Right ventricle myocardium inferior (tissue), 1 donor: ENCODE measurements at regions of chr19 and their contacts with region 1.

Region 1: GRCh38 chr19:37077934-37078725 is at the start of gene ZNF420:
- DNase-seq: peak; percentile 95
- ATAC-seq: peak; percentile 99
- total RNA-seq, gene ZNF420: 11.6 TPM

Region 2: DNA sequence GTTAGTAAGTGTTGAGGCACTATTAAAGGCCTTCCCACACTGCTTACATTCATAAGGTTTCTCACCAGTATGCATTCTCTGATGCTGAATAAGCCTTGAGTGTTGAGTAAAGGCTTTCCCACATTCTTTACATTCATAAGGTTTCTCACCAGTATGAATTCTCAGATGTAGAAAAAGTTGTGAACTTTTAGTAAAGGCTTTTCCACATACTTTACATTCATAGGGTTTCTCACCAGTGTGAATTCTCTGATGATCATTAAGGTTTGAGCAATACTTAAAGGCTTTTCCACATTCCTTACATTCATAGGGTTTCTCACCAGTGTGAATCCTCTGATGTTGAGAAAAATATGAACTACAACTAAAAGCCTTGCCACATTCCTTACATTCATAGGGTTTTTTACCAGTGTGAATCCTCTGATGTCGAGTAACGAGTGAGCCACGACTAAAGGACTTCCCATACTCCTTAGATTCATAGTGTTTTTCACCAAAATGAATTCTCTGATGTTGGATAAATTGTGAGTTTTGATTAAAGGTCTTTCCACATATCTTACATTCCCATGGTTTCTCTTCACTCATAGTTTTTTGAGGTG is 186.3 kb before region 1 on chr19:
- intact Hi-C with region 1: no loop called
- DNase-seq: no peak
- ATAC-seq: no peak

Region 3: GRCh38 chr19:36973021-36973843 is 104.9 kb before region 1 on chr19:
- intact Hi-C with region 1: loop called (anchors 10 kb)
- DNase-seq: peak; percentile 91
- ATAC-seq: peak; percentile 99

Region 4: DNA sequence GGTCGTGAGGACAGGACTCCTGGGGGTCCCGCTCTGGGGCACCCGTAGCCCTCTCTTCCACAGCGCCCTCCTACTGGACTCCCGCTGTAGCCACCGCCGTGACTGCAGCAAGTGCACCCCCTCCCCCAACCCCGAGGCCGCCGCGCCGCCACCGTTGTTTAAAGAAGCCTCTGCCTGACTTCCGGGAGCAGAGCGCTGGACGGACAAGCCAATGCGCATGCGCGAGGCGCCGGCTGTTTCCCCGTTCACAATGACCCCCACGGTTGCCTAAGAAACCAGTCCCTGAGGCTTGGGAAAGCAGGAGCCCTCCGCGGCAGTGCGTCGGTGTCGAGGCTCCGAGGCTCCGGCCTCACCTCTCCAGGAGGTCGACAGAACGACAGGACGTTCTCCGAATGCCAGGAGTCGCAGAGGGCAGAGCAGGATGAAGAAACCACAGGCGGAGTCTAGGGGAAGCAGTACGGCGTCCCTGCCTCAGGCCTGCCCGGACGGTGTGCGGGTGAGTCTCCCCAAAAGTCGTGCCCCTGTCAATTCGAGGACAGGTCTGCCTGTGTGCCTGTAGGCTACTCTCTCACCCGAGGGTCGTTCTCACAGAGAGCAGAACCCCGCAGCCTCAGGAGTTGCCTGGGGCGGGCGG is 70.4 kb before region 1 on chr19:
- intact Hi-C with region 1: loop called (anchors 5 kb)
- DNase-seq: peak; percentile 89
- ATAC-seq: peak; percentile 90

Region 5: GRCh38 chr19:37056776-37057175 is 21.4 kb before region 1 on chr19:
- intact Hi-C with region 1: no loop called
- DNase-seq: no peak
- ATAC-seq: no peak

Region 6: DNA sequence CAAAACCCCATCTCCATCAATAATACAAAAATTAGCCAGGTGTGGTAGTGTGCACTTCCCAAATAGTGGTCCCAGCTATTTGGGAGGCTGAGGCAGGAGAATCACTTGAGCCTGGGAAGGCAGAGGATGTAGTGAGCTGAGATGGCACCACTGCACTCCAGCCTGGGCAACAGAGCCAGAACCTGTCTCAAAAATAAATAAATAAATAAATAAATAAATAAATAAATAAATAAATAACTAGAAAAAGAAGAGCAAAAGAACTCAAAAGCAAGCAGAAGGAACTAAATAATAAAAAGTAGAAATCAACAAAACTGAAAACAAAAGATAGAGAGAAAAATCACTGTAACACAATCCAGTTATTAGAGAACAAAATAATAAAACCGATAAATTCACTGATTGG is 82.0 kb after region 1 on chr19:
- intact Hi-C with region 1: no loop called
- DNase-seq: no peak
- ATAC-seq: no peak

Region 7: GRCh38 chr19:37172368-37173366 is 94.5 kb after region 1 on chr19 and contains the start of gene ZNF585A:
- intact Hi-C with region 1: loop called (anchors 2 kb)
- DNase-seq: peak; percentile 97
- ATAC-seq: peak; percentile 100
- total RNA-seq, gene ZNF585A: 10.3 TPM

Region 8: DNA sequence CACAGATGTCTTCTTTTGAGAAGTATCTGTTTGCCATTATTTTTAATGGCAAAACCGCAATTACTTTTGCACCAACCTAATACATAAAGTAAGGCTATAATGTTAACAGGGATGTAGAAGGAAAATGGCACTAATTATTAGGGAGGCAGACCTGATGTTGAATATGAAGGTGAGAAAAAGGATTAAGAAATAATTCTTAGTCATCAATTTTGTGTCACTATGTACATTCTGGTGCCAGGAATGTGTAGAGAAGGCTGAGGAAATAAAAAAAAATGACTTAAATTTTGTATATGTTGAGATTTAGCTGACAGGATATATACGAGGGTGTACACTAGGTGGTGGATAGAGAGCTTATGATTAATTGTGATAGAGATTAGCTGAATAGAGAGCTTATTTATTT is 119.6 kb after region 1 on chr19:
- intact Hi-C with region 1: no loop called
- DNase-seq: no peak
- ATAC-seq: no peak